B cell (primary cell): ENCODE measurements at regions of chr6 and their contacts with region 1.

Region 1: GRCh38 chr6:13328076-13328874 is at the start of gene TBC1D7:
- DNase-seq: peak; percentile 95
- ATAC-seq: peak; percentile 86
- H3K4me3 ChIP-seq: peak within 1 kb of the TSS; percentile 69 to 98 (median 88)
- H3K4me3 Mint-ChIP-seq: peak within 1 kb of the TSS; percentile 98
- H3K27ac ChIP-seq: peak within 1 kb of the TSS; percentile 86 to 92
- H3K27ac Mint-ChIP-seq: peak within 1 kb of the TSS; percentile 98
- H3K4me1 ChIP-seq: peaks cover 10 to 15% of the 10 kb centered on the region in 2 donors
- H3K4me1 Mint-ChIP-seq: peaks cover 32% of the 10 kb centered on the region
- H3K27me3 ChIP-seq: no peaks in the 10 kb centered on the region
- H3K27me3 Mint-ChIP-seq: no peaks in the 10 kb centered on the region
- CTCF ChIP-seq: no peak
- total RNA-seq, gene TBC1D7: 22.3 and 26.0 TPM in 2 replicates

Region 2: DNA sequence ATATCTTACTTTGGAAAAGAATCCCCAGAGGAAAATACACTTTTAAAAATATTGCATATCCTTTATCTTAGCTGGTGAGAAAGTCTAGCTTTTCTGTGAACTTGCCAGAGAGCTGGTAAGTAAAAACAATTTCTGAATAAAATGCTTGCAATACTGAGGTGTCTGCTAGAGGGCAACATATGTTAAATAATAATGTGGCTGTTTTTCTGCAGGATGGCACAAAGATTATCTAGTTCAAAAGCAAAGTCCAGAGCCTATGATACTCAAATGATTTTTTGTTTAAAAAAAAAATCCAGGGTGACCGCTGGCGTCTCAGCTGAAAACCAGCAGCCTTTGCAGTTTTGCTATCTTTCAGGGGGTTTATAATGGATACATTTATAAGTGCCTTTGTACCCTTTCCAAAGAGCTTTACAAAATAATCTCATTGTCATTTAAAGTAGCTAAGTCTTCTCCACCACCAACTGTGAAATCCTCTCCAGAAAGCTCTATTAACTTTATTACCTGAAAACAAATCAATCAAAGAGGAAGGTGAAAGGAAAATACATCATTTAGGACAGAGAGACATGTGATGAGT is 416.8 kb before region 1 on chr6:
- CTCF ChIA-PET with region 1: interaction called, 109 read pairs
- POLR2A ChIA-PET with region 1: no interaction called
- intact Hi-C with region 1: no loop called
- DNase-seq: peak; percentile 42
- ATAC-seq: no peak
- H3K4me3 ChIP-seq: no peak overlapping the region
- H3K4me3 Mint-ChIP-seq: no peak overlapping the region
- H3K27ac ChIP-seq: no peak overlapping the region
- H3K27ac Mint-ChIP-seq: no peak overlapping the region
- H3K4me1 ChIP-seq: peaks cover 0 to 5% of the 10 kb centered on the region in 2 donors
- H3K4me1 Mint-ChIP-seq: peaks cover 5% of the 10 kb centered on the region
- H3K27me3 ChIP-seq: no peaks in the 10 kb centered on the region
- H3K27me3 Mint-ChIP-seq: peaks cover 9% of the 10 kb centered on the region
- CTCF ChIP-seq: peak; percentile 60

Region 3: DNA sequence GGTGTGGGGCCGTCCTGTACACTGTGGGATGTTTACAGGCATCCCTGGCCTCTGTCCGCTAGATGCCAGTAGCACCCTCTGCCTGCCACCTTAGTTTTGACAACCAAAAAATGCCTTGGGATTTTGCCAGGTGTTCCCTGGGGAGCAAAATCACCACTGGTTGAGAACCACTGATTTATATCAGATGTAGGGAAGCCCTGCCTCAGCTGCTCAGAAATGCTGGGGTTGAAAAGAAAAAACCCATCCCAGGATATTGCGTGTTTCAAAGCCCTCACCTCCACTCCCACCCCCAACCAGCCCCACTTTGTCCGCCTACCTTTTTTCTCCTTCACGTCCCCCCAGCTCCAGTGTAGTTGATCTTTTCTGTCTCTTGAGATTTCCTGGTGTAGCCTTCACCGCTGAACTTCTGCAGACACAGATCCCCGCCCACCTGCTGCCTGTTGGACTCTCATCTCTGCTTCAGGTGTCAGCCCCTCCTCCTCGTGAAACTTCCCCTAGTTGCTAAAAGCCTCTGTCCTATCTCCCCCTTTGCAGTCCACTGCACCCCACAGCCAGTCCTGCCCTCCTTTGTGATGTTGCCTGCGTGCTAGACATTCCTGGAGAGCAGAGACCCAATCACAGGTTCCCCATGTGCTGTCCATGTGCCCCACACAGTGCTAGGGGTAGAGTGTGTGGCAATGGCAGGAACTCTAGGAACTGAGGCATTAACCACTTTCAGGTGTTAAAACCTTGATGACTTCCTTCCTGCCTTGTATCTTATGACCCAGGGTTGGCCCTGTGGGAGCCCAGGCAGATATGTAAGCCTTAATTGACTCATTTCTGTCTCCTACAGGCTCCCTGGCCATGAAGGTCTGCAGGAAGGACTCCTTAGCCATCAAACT is 98.8 kb before region 1 on chr6:
- CTCF ChIA-PET with region 1: interaction called, 30 read pairs
- POLR2A ChIA-PET with region 1: no interaction called
- intact Hi-C with region 1: loop called (anchors 1 kb)
- DNase-seq: peak; percentile 69
- ATAC-seq: peak; percentile 77
- H3K4me3 ChIP-seq: no peak overlapping the region
- H3K4me3 Mint-ChIP-seq: peak overlapping the region; percentile 62
- H3K27ac ChIP-seq: no peak overlapping the region
- H3K27ac Mint-ChIP-seq: no peak overlapping the region
- H3K4me1 ChIP-seq: peaks cover 20 to 23% of the 10 kb centered on the region in 2 donors
- H3K4me1 Mint-ChIP-seq: peaks cover 31% of the 10 kb centered on the region
- H3K27me3 ChIP-seq: peaks cover 0 to 30% (median 9%) of the 10 kb centered on the region in 4 experiments
- H3K27me3 Mint-ChIP-seq: peaks cover 16% of the 10 kb centered on the region
- CTCF ChIP-seq: no peak

Region 4: GRCh38 chr6:13272131-13273046 is 55.9 kb before region 1 on chr6:
- CTCF ChIA-PET with region 1: interaction called, 16 read pairs
- POLR2A ChIA-PET with region 1: interaction called, 8 read pairs
- intact Hi-C with region 1: loop called (anchors 2 kb)
- DNase-seq: peak; percentile 91
- ATAC-seq: peak; percentile 76
- H3K4me3 ChIP-seq: peak overlapping the region; percentile 75 to 99 (median 96)
- H3K4me3 Mint-ChIP-seq: peak overlapping the region; percentile 94
- H3K27ac ChIP-seq: peak overlapping the region; percentile 94 to 96
- H3K27ac Mint-ChIP-seq: peak overlapping the region; percentile 93
- H3K4me1 ChIP-seq: peaks cover 59 to 71% of the 10 kb centered on the region in 2 donors
- H3K4me1 Mint-ChIP-seq: peaks cover 72% of the 10 kb centered on the region
- H3K27me3 ChIP-seq: no peaks in the 10 kb centered on the region
- H3K27me3 Mint-ChIP-seq: no peaks in the 10 kb centered on the region
- CTCF ChIP-seq: no peak

Region 5: GRCh38 chr6:13296536-13296997 is 31.7 kb before region 1 on chr6:
- CTCF ChIA-PET with region 1: interaction called, 47 read pairs
- POLR2A ChIA-PET with region 1: interaction called, 7 read pairs
- intact Hi-C with region 1: no loop called
- DNase-seq: peak; percentile 44
- ATAC-seq: peak; percentile 19
- H3K4me3 ChIP-seq: no peak overlapping the region
- H3K4me3 Mint-ChIP-seq: peak overlapping the region; percentile 53
- H3K27ac ChIP-seq: no peak overlapping the region
- H3K27ac Mint-ChIP-seq: peak overlapping the region; percentile 68
- H3K4me1 ChIP-seq: peaks cover 15 to 26% of the 10 kb centered on the region in 2 donors
- H3K4me1 Mint-ChIP-seq: peaks cover 70% of the 10 kb centered on the region
- H3K27me3 ChIP-seq: no peaks in the 10 kb centered on the region
- H3K27me3 Mint-ChIP-seq: no peaks in the 10 kb centered on the region
- CTCF ChIP-seq: peak; percentile 40

Region 6: GRCh38 chr6:13383328-13384163 is 55.3 kb after region 1 on chr6:
- CTCF ChIA-PET with region 1: interaction called, 22 read pairs
- POLR2A ChIA-PET with region 1: no interaction called
- intact Hi-C with region 1: no loop called
- DNase-seq: peak; percentile 83
- ATAC-seq: peak; percentile 96
- H3K4me3 ChIP-seq: no peak overlapping the region
- H3K4me3 Mint-ChIP-seq: peak overlapping the region; percentile 55
- H3K27ac ChIP-seq: peak overlapping the region; percentile 70 to 84
- H3K27ac Mint-ChIP-seq: peak overlapping the region; percentile 92
- H3K4me1 ChIP-seq: peaks cover 36 to 42% of the 10 kb centered on the region in 2 donors
- H3K4me1 Mint-ChIP-seq: peaks cover 73% of the 10 kb centered on the region
- H3K27me3 ChIP-seq: no peaks in the 10 kb centered on the region
- H3K27me3 Mint-ChIP-seq: no peaks in the 10 kb centered on the region
- CTCF ChIP-seq: peak; percentile 53

Region 7: DNA sequence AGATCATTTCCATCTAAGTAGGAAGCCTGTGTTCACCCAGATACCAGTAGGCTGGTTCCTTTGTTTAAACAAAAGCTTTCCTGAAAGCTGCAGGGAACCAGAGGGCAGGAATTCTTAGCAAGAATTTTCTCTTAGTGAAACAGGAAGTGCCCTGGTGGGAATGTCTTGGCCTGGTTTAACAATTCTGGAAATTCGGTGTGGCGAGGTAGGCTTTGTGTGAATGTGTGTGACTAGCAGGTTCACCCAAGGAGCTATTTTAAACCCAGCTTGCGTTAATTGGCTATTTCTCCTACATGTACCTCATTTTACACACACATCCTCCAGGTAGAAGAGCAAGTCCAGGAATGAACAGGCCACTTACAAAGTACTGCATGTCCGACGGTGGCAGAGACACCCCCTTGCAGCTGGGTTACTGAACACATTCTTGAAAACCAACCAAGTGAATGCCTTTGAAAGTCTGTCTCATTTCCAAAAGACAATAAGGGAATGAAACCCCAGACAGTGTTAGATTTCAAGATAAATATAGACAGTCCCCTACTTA is 94.5 kb after region 1 on chr6:
- CTCF ChIA-PET with region 1: no interaction called
- POLR2A ChIA-PET with region 1: no interaction called
- intact Hi-C with region 1: no loop called
- DNase-seq: no peak
- ATAC-seq: no peak
- H3K4me3 ChIP-seq: no peak overlapping the region
- H3K4me3 Mint-ChIP-seq: no peak overlapping the region
- H3K27ac ChIP-seq: no peak overlapping the region
- H3K27ac Mint-ChIP-seq: no peak overlapping the region
- H3K4me1 ChIP-seq: peaks cover 22 to 49% of the 10 kb centered on the region in 2 donors
- H3K4me1 Mint-ChIP-seq: peaks cover 57% of the 10 kb centered on the region
- H3K27me3 ChIP-seq: peaks cover 0 to 9% (median 0%) of the 10 kb centered on the region in 4 experiments
- H3K27me3 Mint-ChIP-seq: peaks cover 3% of the 10 kb centered on the region
- CTCF ChIP-seq: no peak

Region 8: GRCh38 chr6:13614926-13615798 is 286.9 kb after region 1 on chr6 and contains the start of gene NOL7:
- CTCF ChIA-PET with region 1: interaction called, 8 read pairs
- POLR2A ChIA-PET with region 1: interaction called, 12 read pairs
- intact Hi-C with region 1: loop called (anchors 1 kb)
- DNase-seq: peak; percentile 99
- ATAC-seq: peak; percentile 93
- H3K4me3 ChIP-seq: peak within 1 kb of the TSS; percentile 79 to 94 (median 93)
- H3K4me3 Mint-ChIP-seq: peak within 1 kb of the TSS; percentile 97
- H3K27ac ChIP-seq: peak within 1 kb of the TSS; percentile 73 to 82
- H3K27ac Mint-ChIP-seq: peak within 1 kb of the TSS; percentile 97
- H3K4me1 ChIP-seq: peaks cover 16 to 22% of the 10 kb centered on the region in 2 donors
- H3K4me1 Mint-ChIP-seq: peaks cover 46% of the 10 kb centered on the region
- H3K27me3 ChIP-seq: no peaks in the 10 kb centered on the region
- H3K27me3 Mint-ChIP-seq: no peaks in the 10 kb centered on the region
- CTCF ChIP-seq: peak; percentile 86
- total RNA-seq, gene NOL7: 48.6 and 58.3 TPM in 2 replicates